ENCODE measurements at regions of chr17 and their contacts with region 1.

Region 1: GRCh38 chr17:65718601-65719000 is 157.2 kb upstream of the AXIN2 start:
- DNase-seq: no peak
- ATAC-seq: no peak
- H3K4me3 ChIP-seq: no peak overlapping the region
- H3K27ac ChIP-seq: no peak overlapping the region
- H3K4me1 ChIP-seq: peaks cover 19% of the 10 kb centered on the region
- H3K27me3 ChIP-seq: no peaks in the 10 kb centered on the region
- CTCF ChIP-seq: no peak
- EP300 ChIP-seq: no peak
- POLR2A ChIP-seq: no peak
- RAD21 ChIP-seq: no peak

Region 2: GRCh38 chr17:65535777-65536572 is 182.6 kb before region 1 on chr17:
- CTCF ChIA-PET with region 1: no interaction called
- POLR2A ChIA-PET with region 1: no interaction called
- in situ Hi-C with region 1: no loop called
- intact Hi-C with region 1: no loop called
- DNase-seq: no peak
- ATAC-seq: no peak
- H3K4me3 ChIP-seq: no peak overlapping the region
- H3K27ac ChIP-seq: no peak overlapping the region
- H3K4me1 ChIP-seq: peaks cover 32% of the 10 kb centered on the region
- H3K27me3 ChIP-seq: no peaks in the 10 kb centered on the region
- CTCF ChIP-seq: no peak
- EP300 ChIP-seq: no peak
- POLR2A ChIP-seq: no peak
- RAD21 ChIP-seq: no peak

Region 3: GRCh38 chr17:65547253-65547670 is 171.3 kb before region 1 on chr17:
- CTCF ChIA-PET with region 1: no interaction called
- POLR2A ChIA-PET with region 1: no interaction called
- in situ Hi-C with region 1: no loop called
- intact Hi-C with region 1: no loop called
- DNase-seq: peak; percentile 75
- ATAC-seq: peak; percentile 68
- H3K4me3 ChIP-seq: peak overlapping the region in 1 of 3 experiments; percentile 5; a peak in 2 of 6 replicates
- H3K27ac ChIP-seq: peak overlapping the region; percentile 53
- H3K4me1 ChIP-seq: peaks cover 33% of the 10 kb centered on the region
- H3K27me3 ChIP-seq: no peaks in the 10 kb centered on the region
- CTCF ChIP-seq: no peak
- EP300 ChIP-seq: peak in 1 of 2 experiments; percentile 58; a peak in 1 of 4 replicates
- POLR2A ChIP-seq: no peak
- RAD21 ChIP-seq: no peak

Region 4: GRCh38 chr17:65685110-65685509 is 33.5 kb before region 1 on chr17:
- CTCF ChIA-PET with region 1: no interaction called
- POLR2A ChIA-PET with region 1: no interaction called
- in situ Hi-C with region 1: no loop called
- intact Hi-C with region 1: no loop called
- DNase-seq: no peak
- ATAC-seq: no peak
- H3K4me3 ChIP-seq: no peak overlapping the region
- H3K27ac ChIP-seq: no peak overlapping the region
- H3K4me1 ChIP-seq: peaks cover 15% of the 10 kb centered on the region
- H3K27me3 ChIP-seq: no peaks in the 10 kb centered on the region
- CTCF ChIP-seq: no peak
- EP300 ChIP-seq: no peak
- POLR2A ChIP-seq: no peak
- RAD21 ChIP-seq: no peak

Region 5: DNA sequence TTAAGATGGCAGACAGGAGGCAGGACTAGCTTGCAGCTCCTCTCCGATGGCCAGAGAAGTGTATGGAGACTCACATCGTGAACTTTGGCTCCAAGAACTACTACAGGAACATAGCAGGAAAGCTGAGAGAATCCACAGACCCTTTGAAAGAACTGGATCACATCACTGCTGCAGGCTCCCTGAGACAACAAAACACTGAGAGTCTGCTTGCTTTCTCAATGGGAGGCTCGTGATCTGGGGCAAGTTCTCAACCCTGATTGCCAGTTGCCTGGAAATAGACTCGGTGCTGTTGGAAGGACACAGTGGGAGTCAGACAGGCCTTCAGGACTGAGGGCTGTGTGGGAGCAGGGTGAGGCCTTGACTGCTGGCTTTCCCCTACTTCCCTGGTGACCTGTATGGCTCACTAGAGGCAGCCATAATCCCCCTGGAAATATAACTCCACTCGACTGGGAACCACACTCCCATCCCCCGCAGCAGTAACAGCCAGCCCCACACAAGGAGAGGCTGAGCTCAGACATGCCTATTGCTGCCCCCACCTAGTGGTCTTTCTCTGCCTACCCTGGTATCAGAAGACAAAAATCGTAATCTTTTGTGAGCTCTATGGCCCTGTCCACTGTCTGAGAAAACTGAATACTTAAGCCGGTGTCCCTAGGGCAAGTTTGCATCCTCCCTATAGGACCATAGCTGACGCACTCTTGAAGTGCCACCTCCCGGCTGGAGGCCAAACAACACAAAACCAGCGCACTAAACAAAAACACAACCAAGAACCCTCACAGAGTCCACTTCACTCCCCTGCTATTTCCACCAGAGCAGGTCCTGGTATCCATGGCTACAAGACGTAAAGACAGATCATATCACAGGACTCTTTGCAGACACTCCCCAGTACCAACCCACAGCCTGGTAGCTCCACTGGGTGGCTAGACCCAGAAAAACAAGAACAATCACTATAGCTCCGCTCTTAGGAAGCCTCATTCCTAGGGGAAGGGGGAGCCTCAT is 235.0 kb after region 1 on chr17:
- CTCF ChIA-PET with region 1: no interaction called
- POLR2A ChIA-PET with region 1: no interaction called
- in situ Hi-C with region 1: no loop called
- intact Hi-C with region 1: loop called (anchors 1 kb)
- DNase-seq: peak; percentile 47
- ATAC-seq: peak; percentile 90
- H3K4me3 ChIP-seq: peak overlapping the region; percentile 17 to 52 (median 17); a peak in 5 of 6 replicates
- H3K27ac ChIP-seq: no peak overlapping the region
- H3K4me1 ChIP-seq: peaks cover 13% of the 10 kb centered on the region; the same call in 1 of the 2 replicates
- H3K27me3 ChIP-seq: no peaks in the 10 kb centered on the region
- CTCF ChIP-seq: peak; percentile 66
- EP300 ChIP-seq: no peak
- POLR2A ChIP-seq: 0 out of 4 replicates have a peak, but pooled peaks of 1 of the 2 experiments have one; percentile 28
- RAD21 ChIP-seq: no peak